GM10248 (cell line): ENCODE measurements at regions of chr11 and their contacts with region 1.

Region 1: DNA sequence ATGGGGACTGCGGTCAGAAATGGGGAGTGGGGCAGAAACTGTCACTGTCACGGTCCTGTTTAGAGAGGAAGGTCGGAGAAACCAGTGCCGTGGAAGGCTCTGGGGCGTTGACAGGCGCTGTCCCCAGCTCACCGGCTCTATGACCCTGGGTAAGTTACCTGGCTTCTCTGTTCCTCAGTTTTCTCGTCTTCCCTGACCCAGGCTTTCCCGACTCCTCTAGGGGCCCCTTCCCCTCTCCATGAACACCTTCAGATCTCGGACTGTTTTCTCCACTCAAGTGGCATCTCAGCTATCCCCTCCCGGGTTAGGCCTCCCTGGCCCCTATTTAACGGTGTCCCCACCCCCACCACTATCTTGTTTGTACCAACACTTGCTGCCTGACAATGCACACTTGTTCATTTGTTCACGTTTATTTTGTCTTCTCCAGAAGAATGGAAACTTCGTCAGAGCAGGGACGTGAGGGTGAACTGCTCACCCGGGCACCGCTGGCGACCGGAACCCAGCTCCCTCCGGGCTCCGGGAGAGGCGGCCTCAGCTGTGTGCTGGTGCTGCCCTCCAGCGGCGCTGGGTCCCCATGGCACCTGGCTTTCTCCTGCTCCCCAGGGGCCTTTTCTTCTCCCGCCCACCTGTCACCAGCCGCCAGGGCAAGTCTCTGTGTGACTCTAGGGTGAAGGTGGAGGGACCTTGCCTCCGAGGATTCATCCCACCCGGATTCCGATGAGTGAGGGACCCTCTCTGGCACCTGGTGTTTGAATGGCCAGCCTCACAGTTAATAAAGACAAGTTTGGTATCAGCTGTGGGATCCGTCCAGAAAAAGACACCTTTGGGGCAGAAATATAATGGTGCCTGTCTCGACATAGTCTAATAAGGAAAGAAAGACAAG is 33.1 kb upstream of the SLC35C1 start:
- DNase-seq: peak; percentile 94
- CTCF ChIP-seq: peak; percentile 91

Region 2: GRCh38 chr11:45339729-45340519 is 431.9 kb before region 1 on chr11:
- CTCF ChIA-PET with region 1: interaction called, 17 read pairs
- POLR2A ChIA-PET with region 1: no interaction called
- DNase-seq: peak; percentile 92
- CTCF ChIP-seq: peak; percentile 90

Region 3: GRCh38 chr11:45754261-45754709 is 17.5 kb before region 1 on chr11:
- CTCF ChIA-PET with region 1: interaction called, 43 read pairs
- POLR2A ChIA-PET with region 1: no interaction called
- DNase-seq: no peak
- CTCF ChIP-seq: no peak

Region 4: GRCh38 chr11:45804761-45805304 is 33.0 kb after region 1 on chr11 and contains the start of gene SLC35C1:
- CTCF ChIA-PET with region 1: interaction called, 23 read pairs
- POLR2A ChIA-PET with region 1: no interaction called
- DNase-seq: peak; percentile 99
- CTCF ChIP-seq: peak; percentile 11

Region 5: DNA sequence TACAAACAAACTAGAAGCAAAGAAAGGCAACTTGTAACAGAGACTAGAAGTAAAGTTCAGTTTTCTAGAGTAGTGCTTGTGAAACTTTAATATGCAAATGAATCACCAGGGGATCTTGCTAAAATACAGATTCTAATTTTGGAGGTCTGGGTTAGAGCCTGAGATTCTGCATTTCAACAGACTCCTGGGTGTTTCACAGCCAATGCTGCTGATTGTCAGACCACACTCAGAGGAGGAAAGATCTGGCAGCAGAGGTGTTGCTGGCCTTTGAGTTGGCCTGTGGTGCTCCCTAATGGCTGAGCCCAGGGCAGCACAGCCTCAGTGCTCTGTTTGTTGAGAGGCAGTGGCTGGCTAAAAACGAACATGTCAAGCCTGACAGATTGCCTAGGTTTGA is 80.9 kb after region 1 on chr11:
- CTCF ChIA-PET with region 1: interaction called, 10 read pairs
- POLR2A ChIA-PET with region 1: no interaction called
- DNase-seq: peak; percentile 65
- CTCF ChIP-seq: peak; percentile 62